BJ (cell line): ENCODE measurements at regions of chr13 and their contacts with region 1.

Region 1: DNA sequence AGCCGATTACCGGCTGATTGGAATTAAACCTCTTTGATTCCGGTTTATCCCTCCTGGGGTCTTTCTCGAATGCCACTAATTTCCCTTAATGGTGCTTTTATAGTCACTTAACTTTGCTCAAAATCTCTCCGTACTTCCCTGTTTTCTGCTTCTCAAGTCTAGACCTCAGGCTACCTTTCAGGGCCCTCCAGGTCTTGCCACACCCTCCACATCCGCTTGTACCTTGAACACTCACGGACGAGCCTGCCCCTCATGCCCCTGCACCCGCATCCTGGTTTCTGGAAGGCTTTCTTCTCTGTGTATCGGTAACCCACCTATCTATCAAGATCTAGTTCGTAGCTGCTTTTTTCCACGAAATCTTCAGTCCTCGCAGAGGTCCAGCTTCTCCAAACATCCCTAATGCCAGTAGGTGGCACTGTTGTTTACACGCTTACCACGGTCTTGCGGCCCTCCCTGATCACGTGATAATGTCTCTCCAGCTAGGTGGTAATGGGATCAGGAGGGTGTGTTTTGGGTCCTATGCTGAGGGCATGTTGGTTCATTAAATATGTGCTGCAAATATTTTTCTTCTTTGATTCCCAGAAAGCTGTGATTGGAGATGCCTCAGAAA is 13.8 kb downstream of the ATP12A start:
- DNase-seq: no peak
- H3K4me3 ChIP-seq: no peak overlapping the region
- H3K27me3 ChIP-seq: no peaks in the 10 kb centered on the region
- CTCF ChIP-seq: peak; percentile 65

Region 2: GRCh38 chr13:24709186-24709913 is 15.4 kb after region 1 on chr13:
- CTCF ChIA-PET with region 1: interaction called, 10 read pairs
- POLR2A ChIA-PET with region 1: no interaction called
- DNase-seq: no peak
- H3K4me3 ChIP-seq: no peak overlapping the region
- H3K27me3 ChIP-seq: no peaks in the 10 kb centered on the region; the same call in 1 of the 2 replicates
- CTCF ChIP-seq: no peak